Ovary (tissue), 10 donors: ENCODE measurements at regions of chr17 and their contacts with region 1.

Region 1: DNA sequence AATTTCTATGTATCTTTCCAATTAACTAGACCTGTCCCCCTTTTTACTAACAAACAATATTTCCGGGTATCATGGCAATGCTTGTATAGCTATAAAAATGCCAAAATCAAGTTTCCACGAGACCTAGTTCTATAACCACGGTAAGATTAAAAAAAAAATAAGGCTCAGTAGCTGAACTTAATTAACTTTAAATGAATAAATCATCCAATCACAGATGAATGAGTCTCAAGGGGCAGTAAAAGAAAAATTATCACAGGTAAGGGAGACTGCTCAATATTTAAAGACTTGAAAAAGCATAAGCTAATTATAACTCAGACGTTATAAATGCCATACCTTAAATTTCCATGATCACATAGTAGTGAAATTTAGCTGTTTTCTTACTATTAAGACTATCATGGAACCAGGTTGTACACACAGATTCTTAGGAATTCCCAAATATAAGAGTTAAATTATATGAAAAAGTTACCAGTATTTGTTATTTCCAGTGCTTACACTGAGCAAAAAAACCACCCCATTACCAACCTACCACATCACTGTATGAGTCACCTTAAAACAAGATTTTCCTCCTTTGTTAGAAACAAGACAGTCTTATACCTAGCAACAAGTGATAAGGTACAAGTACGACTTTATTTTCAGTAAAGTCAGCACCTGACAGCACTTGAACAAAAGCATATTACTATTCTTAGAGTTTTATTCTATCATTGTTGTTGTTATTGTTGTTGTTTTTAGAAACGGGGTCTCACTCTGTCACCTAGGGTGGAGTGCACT is 20.6 kb downstream of the SSH2 start:
- DNase-seq: no peak
- H3K4me3 ChIP-seq: no peak overlapping the region
- H3K27ac ChIP-seq: no peak overlapping the region
- H3K4me1 ChIP-seq: no peaks in the 10 kb centered on the region
- H3K27me3 ChIP-seq: no peaks in the 10 kb centered on the region
- CTCF ChIP-seq: no peak
- EP300 ChIP-seq: no peak
- POLR2A ChIP-seq: no peak

Region 2: GRCh38 chr17:29847527-29848400 is 61.7 kb before region 1 on chr17:
- intact Hi-C with region 1: no loop called
- DNase-seq: no peak
- H3K4me3 ChIP-seq: no peak overlapping the region
- H3K27ac ChIP-seq: no peak overlapping the region
- H3K4me1 ChIP-seq: no peaks in the 10 kb centered on the region
- H3K27me3 ChIP-seq: no peaks in the 10 kb centered on the region
- CTCF ChIP-seq: no peak
- EP300 ChIP-seq: no peak
- POLR2A ChIP-seq: no peak

Region 3: DNA sequence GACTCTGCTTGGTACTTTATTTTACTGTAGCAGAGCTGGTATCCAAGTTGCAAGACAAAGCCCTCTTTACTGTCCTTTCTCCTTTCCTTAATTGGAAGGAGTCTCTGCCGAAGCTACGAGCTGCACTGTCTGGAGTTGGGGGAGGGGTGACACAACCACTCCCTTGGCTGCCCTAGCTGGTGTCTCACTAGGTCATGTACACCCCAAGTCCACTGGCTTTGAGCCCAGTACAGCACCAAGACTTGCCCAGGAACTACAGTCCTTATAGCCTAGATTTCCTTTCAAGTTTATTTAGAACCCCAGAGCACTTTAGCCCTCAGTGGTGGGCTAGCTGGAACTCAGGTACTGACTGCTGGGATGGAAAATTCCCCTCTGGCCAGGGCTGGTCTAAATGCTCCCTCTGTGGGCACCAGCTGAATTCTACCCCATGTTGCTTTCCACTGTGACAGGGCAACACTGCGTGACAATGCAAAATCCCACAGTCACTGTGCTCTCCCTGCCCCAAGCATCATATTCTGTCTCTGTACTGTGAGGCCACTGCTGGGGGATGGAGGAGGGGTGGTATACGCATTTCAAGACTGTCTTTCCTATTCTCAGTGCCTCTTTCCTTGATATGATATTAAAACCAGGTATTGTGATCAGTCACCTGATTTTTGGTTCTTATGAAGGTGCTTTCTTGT is 50.4 kb after region 1 on chr17:
- intact Hi-C with region 1: loop called in 1 of 4 experiments (anchors 5 kb)
- DNase-seq: no peak
- H3K4me3 ChIP-seq: no peak overlapping the region
- H3K27ac ChIP-seq: no peak overlapping the region
- H3K4me1 ChIP-seq: no peaks in the 10 kb centered on the region
- H3K27me3 ChIP-seq: no peaks in the 10 kb centered on the region
- CTCF ChIP-seq: no peak
- EP300 ChIP-seq: no peak
- POLR2A ChIP-seq: no peak